AG04450 (cell line): ENCODE measurements at regions of chr1 and their contacts with region 1.

Region 1: DNA sequence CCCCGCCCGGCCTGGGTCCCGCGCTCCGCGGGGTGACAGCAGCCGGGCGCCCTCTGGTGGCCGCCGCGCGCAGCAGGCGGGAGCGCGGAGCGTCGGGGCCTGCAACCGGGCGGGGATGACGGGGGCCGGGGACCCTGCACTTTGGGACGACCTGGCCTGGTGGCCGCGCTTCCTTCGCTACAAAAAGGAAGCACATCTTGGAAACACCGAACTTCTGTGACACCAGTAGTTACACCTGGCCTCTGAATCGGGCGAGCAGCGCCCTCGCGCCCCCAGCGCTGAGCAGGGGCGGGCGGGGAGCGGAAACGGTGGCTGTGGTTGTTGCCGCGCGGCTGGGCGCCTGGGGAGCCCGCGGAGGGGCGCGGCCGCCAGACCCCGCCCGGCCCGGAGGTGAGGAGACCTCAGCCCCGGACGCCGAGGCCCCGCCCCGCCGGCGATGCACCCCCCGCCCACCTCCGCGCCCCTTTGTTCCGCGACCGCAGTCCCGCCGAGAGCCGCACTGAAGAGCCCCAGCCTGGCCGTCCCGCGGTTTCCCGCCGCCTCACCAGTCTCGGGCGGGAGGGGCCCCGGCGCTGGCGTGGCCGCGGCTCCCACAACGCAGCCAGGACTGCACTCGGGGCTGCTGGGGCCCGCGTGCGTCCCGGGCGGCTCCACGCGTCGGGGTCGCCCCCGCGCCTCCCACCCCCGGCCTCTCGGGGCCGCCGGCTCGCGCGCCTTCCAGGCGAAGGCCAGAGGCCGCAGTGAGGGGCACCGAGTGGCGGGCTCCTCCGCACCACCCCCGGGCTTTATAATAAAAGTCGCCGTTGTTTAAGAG is 59.3 kb downstream of the H3-3A start:
- DNase-seq: no peak
- H3K4me3 ChIP-seq: peak overlapping the region; percentile 67
- H3K27ac ChIP-seq: no peak overlapping the region
- H3K27me3 ChIP-seq: peaks cover 3% of the 10 kb centered on the region
- CTCF ChIP-seq: peak; percentile 45

Region 2: DNA sequence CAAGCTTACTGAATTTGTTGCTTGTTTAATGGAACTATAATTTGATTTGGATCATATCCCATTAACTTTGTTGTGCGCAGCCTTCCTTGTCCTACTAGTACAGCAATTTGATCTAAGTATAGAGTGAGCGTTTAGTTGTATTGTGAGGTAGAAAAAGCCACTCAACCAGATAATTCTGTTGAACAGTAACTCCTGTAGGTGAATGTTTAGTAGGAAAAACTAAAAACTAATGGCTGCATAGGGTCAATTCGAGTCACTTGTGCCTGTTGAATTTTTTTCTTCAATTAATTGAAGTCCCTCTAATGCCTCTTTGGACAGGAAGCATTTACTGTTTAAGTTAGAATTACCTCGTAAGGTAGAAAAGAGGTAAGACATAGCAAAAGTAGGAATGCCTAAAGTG is 326.8 kb before region 1 on chr1:
- CTCF ChIA-PET with region 1: no interaction called
- POLR2A ChIA-PET with region 1: no interaction called
- DNase-seq: no peak
- H3K4me3 ChIP-seq: no peak overlapping the region
- H3K27ac ChIP-seq: no peak overlapping the region
- H3K27me3 ChIP-seq: no peaks in the 10 kb centered on the region
- CTCF ChIP-seq: no peak

Region 3: GRCh38 chr1:226100436-226101391 is 21.1 kb before region 1 on chr1:
- CTCF ChIA-PET with region 1: interaction called, 17 read pairs
- POLR2A ChIA-PET with region 1: no interaction called
- DNase-seq: no peak
- H3K4me3 ChIP-seq: peak overlapping the region; percentile 46
- H3K27ac ChIP-seq: peak overlapping the region; percentile 39
- H3K27me3 ChIP-seq: peaks cover 7% of the 10 kb centered on the region
- CTCF ChIP-seq: no peak

Region 4: GRCh38 chr1:226135059-226135651 is 13.4 kb after region 1 on chr1:
- CTCF ChIA-PET with region 1: interaction called, 23 read pairs
- POLR2A ChIA-PET with region 1: no interaction called
- DNase-seq: no peak
- H3K4me3 ChIP-seq: no peak overlapping the region
- H3K27ac ChIP-seq: no peak overlapping the region
- H3K27me3 ChIP-seq: no peaks in the 10 kb centered on the region
- CTCF ChIP-seq: no peak

Region 5: DNA sequence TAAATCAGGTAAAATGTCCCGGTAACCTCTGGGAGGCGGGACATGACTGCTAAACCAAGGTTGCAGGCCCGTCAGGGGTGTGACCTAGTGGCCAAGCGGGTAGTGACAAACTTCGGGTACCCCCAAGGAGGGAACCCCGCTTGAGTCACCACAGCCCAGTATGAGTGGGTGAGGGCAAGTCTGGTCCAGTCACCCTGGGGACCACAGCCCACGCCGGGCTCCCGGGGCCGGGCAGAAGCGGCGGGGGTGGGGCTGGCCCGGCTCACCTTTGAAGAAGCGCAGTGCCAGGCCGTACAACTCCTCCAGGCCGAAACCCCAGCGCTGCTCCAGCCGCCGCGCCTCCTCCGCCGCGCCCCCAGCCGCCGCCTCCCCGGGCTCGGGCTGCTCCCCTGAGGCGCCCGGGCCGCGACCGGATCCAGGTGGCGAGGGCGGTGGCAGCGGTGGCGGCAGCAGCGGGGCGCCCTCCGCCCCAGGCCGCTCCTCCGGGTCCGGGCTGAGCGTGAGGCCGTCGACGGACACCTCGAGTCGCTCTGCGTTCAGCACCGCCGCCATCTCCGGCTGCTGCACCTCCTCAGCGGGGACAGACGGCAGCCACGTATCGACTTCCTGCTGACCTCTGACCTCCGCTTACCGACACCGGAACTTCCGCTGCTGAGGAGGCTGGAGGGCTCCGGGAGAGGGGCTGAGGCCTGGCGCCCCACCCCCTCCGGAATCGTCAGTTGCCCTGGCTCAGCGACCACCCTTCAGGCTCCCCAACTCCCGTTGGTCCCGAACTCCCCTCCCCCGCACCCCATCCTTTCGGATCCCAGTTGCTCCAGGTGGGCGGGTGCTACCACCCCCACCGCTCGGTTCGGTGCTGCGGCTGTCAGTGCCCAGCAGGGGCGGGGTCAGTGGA is 64.6 kb after region 1 on chr1 and contains the start of gene ACBD3:
- CTCF ChIA-PET with region 1: interaction called, 37 read pairs
- POLR2A ChIA-PET with region 1: no interaction called
- DNase-seq: peak; percentile 55
- H3K4me3 ChIP-seq: peak within 1 kb of the TSS; percentile 97
- H3K27ac ChIP-seq: peak within 1 kb of the TSS; percentile 65
- H3K27me3 ChIP-seq: no peaks in the 10 kb centered on the region
- CTCF ChIP-seq: no peak; the same call in 1 of the 2 replicates
- polyA plus RNA-seq, gene ACBD3: 49.6 and 63.0 TPM in 2 replicates

Region 6: GRCh38 chr1:226274138-226274537 is 152.3 kb after region 1 on chr1:
- CTCF ChIA-PET with region 1: interaction called, 10 read pairs
- POLR2A ChIA-PET with region 1: no interaction called
- DNase-seq: no peak
- H3K4me3 ChIP-seq: no peak overlapping the region
- H3K27ac ChIP-seq: no peak overlapping the region
- H3K27me3 ChIP-seq: no peaks in the 10 kb centered on the region
- CTCF ChIP-seq: no peak

Region 7: GRCh38 chr1:226332947-226333346 is 211.2 kb after region 1 on chr1:
- CTCF ChIA-PET with region 1: interaction called, 27 read pairs
- POLR2A ChIA-PET with region 1: no interaction called
- DNase-seq: no peak
- H3K4me3 ChIP-seq: peak overlapping the region; percentile 38
- H3K27ac ChIP-seq: no peak overlapping the region
- H3K27me3 ChIP-seq: peaks cover 11% of the 10 kb centered on the region
- CTCF ChIP-seq: no peak

Region 8: DNA sequence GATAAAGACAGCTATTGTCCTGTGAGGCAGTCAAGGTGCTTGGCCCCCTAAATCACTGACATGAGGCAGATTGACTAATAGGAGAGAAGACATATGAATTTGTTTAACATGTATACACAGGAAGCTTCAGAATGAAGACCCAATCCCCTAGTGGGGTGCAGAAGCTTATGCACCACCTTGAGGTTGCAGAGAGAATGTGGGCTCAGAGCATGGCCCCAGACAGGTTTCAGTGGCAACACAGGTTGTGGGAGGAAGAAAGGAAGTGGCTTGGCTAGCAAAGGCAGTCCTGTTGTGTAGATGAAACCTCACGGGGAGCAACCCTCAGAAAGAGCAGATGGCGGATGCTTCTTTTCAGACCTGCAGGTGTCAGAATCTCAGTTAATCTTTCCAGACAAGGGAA is 323.1 kb after region 1 on chr1:
- CTCF ChIA-PET with region 1: no interaction called
- POLR2A ChIA-PET with region 1: no interaction called
- DNase-seq: no peak
- H3K4me3 ChIP-seq: no peak overlapping the region
- H3K27ac ChIP-seq: no peak overlapping the region
- H3K27me3 ChIP-seq: peaks cover 5% of the 10 kb centered on the region
- CTCF ChIP-seq: no peak